Activated T-helper 1 cell treated with anti-CD3 and anti-CD28 coated beads, Interleukin-12 subunit alpha, Interleukin-12 subunit beta, Interleukin-2, Interleukin-4 antibody, amounts not matched to agents 30 ng/mL and 10 ng/mL and 1 ng/mL, durations not matched to agents 14 hours and 24 hours and 36 hours (primary cell): ENCODE measurements at regions of chr15 and their contacts with region 1.

Region 1: GRCh38 chr15:59104912-59105732 is at the start of gene CCNB2:
- DNase-seq: peak; percentile 85
- H3K4me3 Mint-ChIP-seq: peak within 1 kb of the TSS; percentile 96
- H3K27ac Mint-ChIP-seq: peak within 1 kb of the TSS; percentile 99
- H3K4me1 Mint-ChIP-seq: peaks cover 46% of the 10 kb centered on the region
- H3K27me3 Mint-ChIP-seq: no peaks in the 10 kb centered on the region
- total RNA-seq, gene CCNB2: 36.6 and 38.2 TPM in 2 replicates

Region 2: DNA sequence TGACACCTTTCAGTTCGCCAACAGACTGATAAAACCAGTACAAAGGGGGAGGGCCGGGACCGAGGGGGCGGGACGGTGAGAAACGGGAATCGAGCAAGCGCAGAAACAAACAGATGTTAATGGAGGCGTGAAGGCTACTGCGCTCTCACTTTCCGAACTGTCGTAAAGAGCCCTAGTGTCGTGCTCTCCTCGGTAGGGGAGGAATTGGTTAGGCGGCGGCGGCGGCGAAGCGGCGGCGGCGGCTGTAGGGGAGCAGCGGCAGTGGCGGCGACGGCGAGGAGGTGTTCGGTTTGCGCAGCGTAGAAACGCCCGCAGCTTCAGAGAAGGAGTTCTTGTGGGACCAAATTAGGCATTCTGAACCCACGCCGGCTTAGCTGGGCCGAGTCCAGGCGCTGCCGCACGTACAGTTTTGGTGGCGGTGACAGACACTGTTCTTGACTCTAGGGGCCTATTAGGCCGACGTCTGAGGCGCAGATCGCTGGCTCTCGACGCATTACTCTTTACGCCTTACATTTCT is 117.6 kb before region 1 on chr15 and contains the start of gene RNF111:
- intact Hi-C with region 1: loop called (anchors 1 kb)
- DNase-seq: peak; percentile 85
- H3K4me3 Mint-ChIP-seq: peak within 1 kb of the TSS; percentile 96
- H3K27ac Mint-ChIP-seq: peak within 1 kb of the TSS; percentile 94
- H3K4me1 Mint-ChIP-seq: peaks cover 47% of the 10 kb centered on the region
- H3K27me3 Mint-ChIP-seq: peaks cover 4% of the 10 kb centered on the region
- total RNA-seq, gene RNF111: 35.3 and 38.0 TPM in 2 replicates

Region 3: DNA sequence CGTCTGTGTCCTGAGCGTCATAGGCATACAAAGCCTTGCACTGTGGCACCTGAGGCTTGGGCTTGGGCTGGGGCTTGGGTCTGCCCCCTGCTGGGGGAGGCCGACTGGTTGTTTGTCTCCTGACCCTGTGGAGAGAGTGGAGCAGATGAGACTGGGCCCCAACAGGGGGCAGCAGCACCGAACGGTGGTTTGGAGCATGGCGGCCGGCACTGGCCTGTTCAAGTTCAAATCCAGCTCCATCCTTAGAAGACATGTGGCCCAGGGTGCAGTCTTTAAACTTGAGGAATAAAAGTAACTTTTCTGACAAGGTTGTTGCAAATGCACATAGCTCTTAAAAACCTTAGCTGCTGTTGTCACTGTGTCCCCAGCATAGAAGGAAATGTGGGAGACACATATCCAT is 33.1 kb after region 1 on chr15:
- intact Hi-C with region 1: loop called (anchors 2 kb)
- DNase-seq: peak; percentile 37
- H3K4me3 Mint-ChIP-seq: no peak overlapping the region
- H3K27ac Mint-ChIP-seq: peak overlapping the region; percentile 88
- H3K4me1 Mint-ChIP-seq: peaks cover 48% of the 10 kb centered on the region
- H3K27me3 Mint-ChIP-seq: no peaks in the 10 kb centered on the region

Region 4: DNA sequence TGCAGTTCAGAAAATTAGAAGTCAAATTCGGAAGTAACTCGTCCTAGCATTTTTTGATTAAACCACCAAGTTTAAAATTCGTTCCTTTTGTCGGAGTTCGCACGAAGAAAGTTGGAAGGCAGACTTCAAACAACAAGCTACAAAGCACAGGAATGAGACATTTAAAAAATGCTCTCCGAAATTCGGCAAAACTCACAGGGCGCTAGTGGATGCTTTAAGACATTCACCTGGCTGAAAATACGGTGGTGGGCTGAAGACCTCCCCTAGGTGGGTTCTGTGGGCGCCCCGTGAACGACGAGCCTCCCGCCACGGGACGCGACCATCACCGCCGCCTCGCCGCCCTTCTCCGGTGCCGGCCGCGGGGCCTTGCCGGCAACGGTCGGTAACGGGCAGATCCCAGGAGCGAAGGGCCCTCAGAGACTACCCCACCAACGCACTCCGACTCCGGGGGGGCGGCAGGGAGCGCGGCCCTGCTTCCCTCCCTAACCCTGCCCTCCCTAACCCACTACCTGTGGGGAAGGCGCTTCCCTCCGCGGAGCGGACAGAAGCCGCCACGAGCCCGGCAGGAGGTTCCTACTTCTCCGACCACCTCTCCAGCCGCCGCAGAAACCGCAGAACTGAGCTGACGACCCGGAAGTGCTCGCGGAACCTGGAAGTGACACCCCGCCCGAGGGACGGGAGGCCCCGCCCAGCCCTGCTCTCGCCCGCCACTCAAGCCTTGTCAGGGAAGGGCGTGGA is 551.9 kb after region 1 on chr15 and contains the start of gene GTF2A2:
- intact Hi-C with region 1: loop called (anchors 2 kb)
- DNase-seq: peak; percentile 93
- H3K4me3 Mint-ChIP-seq: no peak within 1 kb of the TSS
- H3K27ac Mint-ChIP-seq: peak within 1 kb of the TSS; percentile 79
- H3K4me1 Mint-ChIP-seq: no peaks in the 10 kb centered on the region
- H3K27me3 Mint-ChIP-seq: no peaks in the 10 kb centered on the region
- total RNA-seq, gene GTF2A2: 189 and 197 TPM in 2 replicates